PC-3 (cell line): ENCODE measurements at regions of chr5 and their contacts with region 1.

Region 1: GRCh38 chr5:36264202-36264760 is 22.6 kb upstream of the NADK2 start:
- DNase-seq: no peak
- ATAC-seq: no peak
- H3K4me3 ChIP-seq: no peak overlapping the region
- H3K27ac ChIP-seq: no peak overlapping the region
- H3K4me1 ChIP-seq: no peaks in the 10 kb centered on the region
- H3K27me3 ChIP-seq: no peaks in the 10 kb centered on the region
- CTCF ChIP-seq: no peak

Region 2: GRCh38 chr5:36305571-36306326 is 41.5 kb after region 1 on chr5:
- CTCF ChIA-PET with region 1: no interaction called
- POLR2A ChIA-PET with region 1: no interaction called
- intact Hi-C with region 1: loop called (anchors 1 kb)
- DNase-seq: peak; percentile 63
- ATAC-seq: peak; percentile 65
- H3K4me3 ChIP-seq: no peak overlapping the region
- H3K27ac ChIP-seq: no peak overlapping the region
- H3K4me1 ChIP-seq: peaks cover 19% of the 10 kb centered on the region
- H3K27me3 ChIP-seq: peaks cover 21% of the 10 kb centered on the region
- CTCF ChIP-seq: peak; percentile 90

Region 3: GRCh38 chr5:36397901-36398536 is 133.7 kb after region 1 on chr5:
- CTCF ChIA-PET with region 1: interaction called, 3 read pairs
- POLR2A ChIA-PET with region 1: no interaction called
- intact Hi-C with region 1: loop called (anchors 1 kb)
- DNase-seq: peak; percentile 49
- ATAC-seq: peak; percentile 24; the same call in 1 of the 2 replicates
- H3K4me3 ChIP-seq: no peak overlapping the region
- H3K27ac ChIP-seq: no peak overlapping the region
- H3K4me1 ChIP-seq: no peaks in the 10 kb centered on the region
- H3K27me3 ChIP-seq: no peaks in the 10 kb centered on the region
- CTCF ChIP-seq: peak; percentile 67

Region 4: DNA sequence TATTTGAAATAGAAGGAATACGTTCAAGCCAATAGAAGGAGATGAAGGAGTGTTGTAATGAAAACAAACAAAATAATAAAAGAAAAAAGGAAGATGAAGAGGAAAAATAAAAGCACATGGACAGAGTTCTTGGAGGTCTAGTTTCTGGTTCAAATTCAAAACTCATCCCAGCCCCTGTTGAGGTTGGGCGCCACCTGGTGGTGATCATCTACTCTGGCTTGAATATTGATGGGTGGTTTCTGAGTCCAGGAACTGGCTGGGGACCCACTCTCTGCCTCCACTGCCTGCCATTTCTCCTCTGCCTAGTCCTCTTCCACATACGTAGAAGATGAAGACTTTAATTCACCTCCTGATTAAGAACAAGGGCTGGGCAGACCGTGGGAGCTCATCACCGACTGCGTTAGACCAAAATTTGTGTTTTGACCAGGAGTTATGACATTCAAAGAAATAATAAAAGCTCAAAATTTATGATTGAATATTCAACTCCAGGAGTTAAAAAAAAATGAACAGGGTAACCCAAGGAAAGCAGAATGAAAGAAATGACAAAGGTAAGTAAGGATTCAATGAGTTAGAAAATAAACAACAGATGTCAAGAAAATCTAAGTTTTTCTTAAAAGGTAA is 243.2 kb after region 1 on chr5:
- CTCF ChIA-PET with region 1: no interaction called
- POLR2A ChIA-PET with region 1: no interaction called
- intact Hi-C with region 1: loop called (anchors 2 kb)
- DNase-seq: peak; percentile 86
- ATAC-seq: peak; percentile 39
- H3K4me3 ChIP-seq: no peak overlapping the region
- H3K27ac ChIP-seq: no peak overlapping the region
- H3K4me1 ChIP-seq: peaks cover 18% of the 10 kb centered on the region
- H3K27me3 ChIP-seq: no peaks in the 10 kb centered on the region
- CTCF ChIP-seq: peak; percentile 93

Region 5: GRCh38 chr5:36695677-36696673 is 431.7 kb after region 1 on chr5:
- CTCF ChIA-PET with region 1: no interaction called
- POLR2A ChIA-PET with region 1: no interaction called
- intact Hi-C with region 1: loop called (anchors 1 kb)
- DNase-seq: peak; percentile 86
- ATAC-seq: peak; percentile 78
- H3K4me3 ChIP-seq: no peak overlapping the region
- H3K27ac ChIP-seq: no peak overlapping the region
- H3K4me1 ChIP-seq: no peaks in the 10 kb centered on the region
- H3K27me3 ChIP-seq: peaks cover 11% of the 10 kb centered on the region
- CTCF ChIP-seq: peak; percentile 90